T-cell (primary cell): ENCODE measurements at regions of chr3 and their contacts with region 1.

Region 1: GRCh38 chr3:16511681-16512434 is 1.6 kb downstream of the RFTN1 start:
- DNase-seq: peak; percentile 39 to 93 (median 84)
- ATAC-seq: peak; percentile 68 to 88 (median 70)
- H3K4me3 ChIP-seq: peak overlapping the region; percentile 89 to 91
- H3K4me3 Mint-ChIP-seq: peak overlapping the region; percentile 97 to 98 (median 97)
- H3K27ac ChIP-seq: peak overlapping the region; percentile 88
- H3K27ac Mint-ChIP-seq: peak overlapping the region; percentile 89 to 94
- H3K4me1 ChIP-seq: peaks cover 42 to 75% of the 10 kb centered on the region in 2 experiments
- H3K4me1 Mint-ChIP-seq: peaks cover 76 to 83% (median 83%) of the 10 kb centered on the region in 3 donors
- H3K27me3 ChIP-seq: no peaks in the 10 kb centered on the region
- H3K27me3 Mint-ChIP-seq: no peaks in the 10 kb centered on the region

Region 2: GRCh38 chr3:16482770-16483531 is 28.9 kb before region 1 on chr3:
- CTCF ChIA-PET with region 1: interaction called in 1 of 2 experiments, 8 read pairs
- POLR2A ChIA-PET with region 1: interaction called, 4 to 11 read pairs
- DNase-seq: peak in 33 of 35 experiments; percentile 13 to 74 (median 48)
- ATAC-seq: peak; percentile 70 to 79 (median 78)
- H3K4me3 ChIP-seq: no peak overlapping the region
- H3K4me3 Mint-ChIP-seq: peak overlapping the region; percentile 56 to 68 (median 66)
- H3K27ac ChIP-seq: peak overlapping the region; percentile 76
- H3K27ac Mint-ChIP-seq: peak overlapping the region; percentile 93 to 98
- H3K4me1 ChIP-seq: peaks cover 33 to 47% of the 10 kb centered on the region in 2 experiments
- H3K4me1 Mint-ChIP-seq: peaks cover 77 to 89% (median 84%) of the 10 kb centered on the region in 3 donors
- H3K27me3 ChIP-seq: no peaks in the 10 kb centered on the region
- H3K27me3 Mint-ChIP-seq: no peaks in the 10 kb centered on the region

Region 3: GRCh38 chr3:16496408-16497222 is 15.2 kb before region 1 on chr3:
- CTCF ChIA-PET with region 1: interaction called in 1 of 2 experiments, 3 read pairs
- POLR2A ChIA-PET with region 1: interaction called, 5 to 10 read pairs
- DNase-seq: no peak
- ATAC-seq: peak; percentile 40 to 73 (median 58)
- H3K4me3 ChIP-seq: no peak overlapping the region
- H3K4me3 Mint-ChIP-seq: peak overlapping the region in 1 of 3 donors; percentile 31
- H3K27ac ChIP-seq: peak overlapping the region; percentile 10
- H3K27ac Mint-ChIP-seq: peak overlapping the region; percentile 75 to 78
- H3K4me1 ChIP-seq: peaks cover 25 to 45% of the 10 kb centered on the region in 2 experiments
- H3K4me1 Mint-ChIP-seq: peaks cover 59 to 74% (median 72%) of the 10 kb centered on the region in 3 donors
- H3K27me3 ChIP-seq: no peaks in the 10 kb centered on the region
- H3K27me3 Mint-ChIP-seq: no peaks in the 10 kb centered on the region

Region 4: GRCh38 chr3:16741890-16742289 is 230.0 kb after region 1 on chr3:
- CTCF ChIA-PET with region 1: no interaction called
- POLR2A ChIA-PET with region 1: no interaction called
- DNase-seq: no peak
- ATAC-seq: no peak
- H3K4me3 ChIP-seq: no peak overlapping the region
- H3K4me3 Mint-ChIP-seq: no peak overlapping the region
- H3K27ac ChIP-seq: no peak overlapping the region
- H3K27ac Mint-ChIP-seq: no peak overlapping the region
- H3K4me1 ChIP-seq: no peaks in the 10 kb centered on the region
- H3K4me1 Mint-ChIP-seq: no peaks in the 10 kb centered on the region
- H3K27me3 ChIP-seq: no peaks in the 10 kb centered on the region
- H3K27me3 Mint-ChIP-seq: peaks cover 0 to 1% of the 10 kb centered on the region in 2 donors